ENCODE measurements at regions of chr9 and their contacts with region 1.

Region 1: DNA sequence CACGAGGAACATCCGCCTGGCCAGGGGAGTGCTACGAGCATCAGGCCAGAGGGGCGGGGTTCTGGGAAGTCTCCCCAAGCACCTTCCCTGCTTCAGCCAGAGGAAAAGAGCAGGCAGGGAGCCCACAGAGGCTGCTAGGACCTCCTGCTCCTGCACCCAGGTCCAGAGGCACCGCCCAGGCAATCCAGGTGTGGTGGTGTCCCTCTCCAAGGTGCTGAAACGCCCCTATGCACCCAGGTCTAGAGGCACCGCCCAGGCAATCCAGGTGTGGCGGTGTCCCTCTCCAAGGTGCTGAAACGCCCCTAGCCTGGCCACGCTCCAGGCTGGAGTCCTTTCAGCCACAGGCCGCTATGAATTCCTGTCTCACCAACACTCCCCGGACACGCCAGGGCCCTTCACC is 10.7 kb upstream of the UBAC1 start:
- DNase-seq: peak; percentile 57
- ATAC-seq: no peak
- H3K4me3 ChIP-seq: no peak overlapping the region
- H3K4me3 Mint-ChIP-seq: no peak overlapping the region
- H3K27ac ChIP-seq: no peak overlapping the region
- H3K27ac Mint-ChIP-seq: no peak overlapping the region
- H3K4me1 ChIP-seq: peaks cover 0 to 8% of the 10 kb centered on the region in 2 donors
- H3K4me1 Mint-ChIP-seq: peaks cover 7% of the 10 kb centered on the region
- H3K27me3 ChIP-seq: peaks cover 0 to 17% (median 1%) of the 10 kb centered on the region in 4 experiments
- H3K27me3 Mint-ChIP-seq: peaks cover 29% of the 10 kb centered on the region
- CTCF ChIP-seq: no peak

Region 2: GRCh38 chr9:135821733-135822373 is 150.0 kb before region 1 on chr9:
- CTCF ChIA-PET with region 1: no interaction called
- POLR2A ChIA-PET with region 1: no interaction called
- intact Hi-C with region 1: no loop called
- DNase-seq: no peak
- ATAC-seq: no peak
- H3K4me3 ChIP-seq: no peak overlapping the region
- H3K4me3 Mint-ChIP-seq: no peak overlapping the region
- H3K27ac ChIP-seq: no peak overlapping the region
- H3K27ac Mint-ChIP-seq: no peak overlapping the region
- H3K4me1 ChIP-seq: no peaks in the 10 kb centered on the region
- H3K4me1 Mint-ChIP-seq: no peaks in the 10 kb centered on the region
- H3K27me3 ChIP-seq: no peaks in the 10 kb centered on the region
- H3K27me3 Mint-ChIP-seq: no peaks in the 10 kb centered on the region
- CTCF ChIP-seq: no peak

Region 3: DNA sequence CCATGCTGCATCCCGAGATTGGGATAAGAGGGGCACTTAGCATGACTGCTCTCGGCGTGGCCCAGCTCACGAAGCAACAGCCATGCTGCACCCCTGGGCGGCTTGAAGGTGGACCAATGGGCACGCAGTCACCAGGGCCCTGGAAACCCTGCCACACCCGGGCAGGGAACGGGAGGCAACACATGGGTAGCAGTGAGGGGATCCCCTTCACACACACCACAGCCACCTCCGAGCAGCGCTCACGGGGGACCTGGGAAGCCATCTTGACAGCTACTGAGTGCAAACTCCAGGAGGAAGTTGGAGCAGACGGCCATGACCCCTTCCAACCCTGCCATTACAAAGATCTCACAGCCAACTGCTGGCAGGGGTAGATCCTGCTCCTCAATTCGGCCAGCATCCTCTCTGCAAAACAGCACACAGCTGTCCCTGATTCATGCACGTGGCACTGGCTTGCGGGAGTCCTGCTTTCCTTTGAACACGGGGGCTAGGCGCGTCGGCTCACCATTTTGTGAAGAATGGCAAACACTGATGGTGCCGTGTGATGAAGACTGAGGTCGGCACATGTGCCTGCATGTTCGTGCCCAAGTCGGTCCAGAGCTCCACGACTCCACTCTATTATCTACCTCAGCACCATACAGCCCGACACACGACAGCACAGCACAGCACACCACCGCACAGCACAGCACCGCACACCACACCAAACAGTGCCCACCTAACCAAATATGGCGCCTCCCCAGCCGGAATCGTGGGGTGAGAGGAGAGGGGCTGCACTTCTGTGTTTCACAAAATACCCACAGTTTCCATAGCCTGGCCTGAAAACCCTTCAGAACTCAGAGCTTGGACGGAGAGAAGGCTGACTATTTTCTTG is 15.7 kb before region 1 on chr9:
- CTCF ChIA-PET with region 1: interaction called, 18 read pairs
- POLR2A ChIA-PET with region 1: no interaction called
- intact Hi-C with region 1: no loop called
- DNase-seq: no peak
- ATAC-seq: no peak
- H3K4me3 ChIP-seq: no peak overlapping the region
- H3K4me3 Mint-ChIP-seq: no peak overlapping the region
- H3K27ac ChIP-seq: no peak overlapping the region
- H3K27ac Mint-ChIP-seq: no peak overlapping the region
- H3K4me1 ChIP-seq: peaks cover 8 to 12% of the 10 kb centered on the region in 2 donors
- H3K4me1 Mint-ChIP-seq: peaks cover 17% of the 10 kb centered on the region
- H3K27me3 ChIP-seq: no peaks in the 10 kb centered on the region
- H3K27me3 Mint-ChIP-seq: no peaks in the 10 kb centered on the region
- CTCF ChIP-seq: no peak

Measured in B cell (primary cell).